ENCODE measurements at regions of chr18 and their contacts with region 1.

Region 1: GRCh38 chr18:13381944-13382365 is 163.4 kb downstream of the LDLRAD4 start:
- DNase-seq: peak; percentile 87
- H3K4me3 Mint-ChIP-seq: peak overlapping the region; percentile 72
- H3K27ac Mint-ChIP-seq: peak overlapping the region; percentile 96
- H3K4me1 Mint-ChIP-seq: peaks cover 52% of the 10 kb centered on the region
- H3K27me3 Mint-ChIP-seq: no peaks in the 10 kb centered on the region

Region 2: GRCh38 chr18:13500227-13500865 is 118.4 kb after region 1 on chr18:
- intact Hi-C with region 1: loop called (anchors 5 kb)
- DNase-seq: peak; percentile 66
- H3K4me3 Mint-ChIP-seq: no peak overlapping the region
- H3K27ac Mint-ChIP-seq: no peak overlapping the region
- H3K4me1 Mint-ChIP-seq: peaks cover 25% of the 10 kb centered on the region
- H3K27me3 Mint-ChIP-seq: no peaks in the 10 kb centered on the region

Measured in activated CD4-positive, alpha-beta T cell treated with anti-CD3 and anti-CD28 coated beads, Interleukin-2, amount 10 ng/mL, durations not matched to agents 24 days and 14 days (primary cell).